Thyroid gland (tissue), 4 donors: ENCODE measurements at regions of chr19 and their contacts with region 1.

Region 1: DNA sequence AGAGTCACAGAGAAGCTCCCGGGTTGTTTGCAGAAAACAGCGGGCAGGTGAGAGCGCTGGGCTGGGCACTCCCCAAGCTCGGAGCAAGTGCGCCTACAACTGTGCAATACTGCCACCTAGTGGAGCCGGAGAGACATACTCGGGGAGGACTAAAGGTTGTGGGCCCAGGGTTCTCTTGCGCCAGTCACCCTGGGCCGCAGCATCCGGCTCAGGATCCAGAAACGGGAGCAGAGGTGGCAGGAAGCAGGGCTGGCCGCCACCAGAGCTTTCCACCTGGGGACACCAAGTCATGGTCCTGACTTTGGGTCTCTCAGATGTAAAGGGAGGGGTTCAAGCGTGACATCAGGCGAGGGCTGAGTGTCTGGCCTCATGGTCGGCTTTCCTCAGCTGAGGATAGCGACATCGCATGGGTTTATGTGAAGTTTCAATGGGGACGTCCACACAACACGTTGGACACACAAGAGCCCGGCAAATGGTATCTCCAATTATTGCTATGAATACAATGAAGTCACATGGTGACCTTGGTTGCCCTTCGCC is 11.2 kb upstream of the KLK4 start:
- DNase-seq: peak; percentile 79 to 86
- H3K4me3 ChIP-seq: no peak overlapping the region
- H3K27ac ChIP-seq: no peak overlapping the region
- H3K4me1 ChIP-seq: peaks cover 3 to 15% of the 10 kb centered on the region in 2 donors
- H3K27me3 ChIP-seq: no peaks in the 10 kb centered on the region
- CTCF ChIP-seq: peak; percentile 52 to 94 (median 89)
- POLR2A ChIP-seq: no peak

Region 2: GRCh38 chr19:50794439-50795237 is 127.7 kb before region 1 on chr19:
- intact Hi-C with region 1: loop called (anchors 5 kb)
- DNase-seq: peak; percentile 39 to 44
- H3K4me3 ChIP-seq: no peak overlapping the region
- H3K27ac ChIP-seq: no peak overlapping the region
- H3K4me1 ChIP-seq: peaks cover 0 to 4% of the 10 kb centered on the region in 2 donors
- H3K27me3 ChIP-seq: no peaks in the 10 kb centered on the region
- CTCF ChIP-seq: peak in 3 of 6 experiments; percentile 6 to 36 (median 25)
- POLR2A ChIP-seq: no peak

Region 3: GRCh38 chr19:51047031-51047335 is 124.6 kb after region 1 on chr19:
- intact Hi-C with region 1: no loop called
- DNase-seq: peak in 1 of 2 donors; percentile 4
- H3K4me3 ChIP-seq: no peak overlapping the region
- H3K27ac ChIP-seq: no peak overlapping the region
- H3K4me1 ChIP-seq: no peaks in the 10 kb centered on the region
- H3K27me3 ChIP-seq: no peaks in the 10 kb centered on the region
- CTCF ChIP-seq: no peak
- POLR2A ChIP-seq: no peak